ENCODE measurements at regions of chr14 and their contacts with region 1.

Region 1: GRCh38 chr14:61403411-61403810 is 82.0 kb downstream of the PRKCH start:
- DNase-seq: peak in 15 of 35 experiments; percentile 18 to 73 (median 35)
- ATAC-seq: peak; percentile 80 to 90 (median 88)
- H3K4me3 ChIP-seq: no peak overlapping the region
- H3K4me3 Mint-ChIP-seq: peak overlapping the region; percentile 39 to 65 (median 54)
- H3K27ac ChIP-seq: peak overlapping the region; percentile 83
- H3K27ac Mint-ChIP-seq: peak overlapping the region; percentile 94 to 97
- H3K4me1 ChIP-seq: peaks cover 59 to 82% of the 10 kb centered on the region in 2 experiments
- H3K4me1 Mint-ChIP-seq: peaks cover 48 to 91% (median 89%) of the 10 kb centered on the region in 3 donors
- H3K27me3 ChIP-seq: no peaks in the 10 kb centered on the region
- H3K27me3 Mint-ChIP-seq: no peaks in the 10 kb centered on the region

Region 2: GRCh38 chr14:61330511-61330910 is 72.9 kb before region 1 on chr14:
- CTCF ChIA-PET with region 1: interaction called in 1 of 2 experiments, 4 read pairs
- POLR2A ChIA-PET with region 1: interaction called, 3 to 16 read pairs
- DNase-seq: peak in 1 of 35 experiments; percentile 41
- ATAC-seq: peak in 2 of 4 experiments; percentile 11 to 18
- H3K4me3 ChIP-seq: peak overlapping the region in 1 of 2 donors; percentile 10
- H3K4me3 Mint-ChIP-seq: peak overlapping the region; percentile 98 to 99 (median 99)
- H3K27ac ChIP-seq: peak overlapping the region; percentile 93
- H3K27ac Mint-ChIP-seq: peak overlapping the region; percentile 95 to 96
- H3K4me1 ChIP-seq: peaks cover 56 to 75% of the 10 kb centered on the region in 2 experiments
- H3K4me1 Mint-ChIP-seq: peaks cover 88 to 93% (median 89%) of the 10 kb centered on the region in 3 donors
- H3K27me3 ChIP-seq: no peaks in the 10 kb centered on the region
- H3K27me3 Mint-ChIP-seq: no peaks in the 10 kb centered on the region

Region 3: GRCh38 chr14:61420326-61420725 is 16.9 kb after region 1 on chr14:
- CTCF ChIA-PET with region 1: interaction called, 3 to 5 read pairs
- POLR2A ChIA-PET with region 1: interaction called in 1 of 2 experiments, 15 read pairs
- DNase-seq: peak in 3 of 35 experiments; percentile 13 to 65 (median 58)
- ATAC-seq: peak; percentile 33 to 52 (median 47)
- H3K4me3 ChIP-seq: no peak overlapping the region
- H3K4me3 Mint-ChIP-seq: peak overlapping the region in 2 of 3 donors; percentile 37 to 45
- H3K27ac ChIP-seq: peak overlapping the region; percentile 56
- H3K27ac Mint-ChIP-seq: peak overlapping the region in 1 of 2 donors; percentile 82
- H3K4me1 ChIP-seq: peaks cover 54 to 82% of the 10 kb centered on the region in 2 experiments
- H3K4me1 Mint-ChIP-seq: peaks cover 5 to 16% (median 14%) of the 10 kb centered on the region in 3 donors
- H3K27me3 ChIP-seq: no peaks in the 10 kb centered on the region
- H3K27me3 Mint-ChIP-seq: no peaks in the 10 kb centered on the region

Region 4: DNA sequence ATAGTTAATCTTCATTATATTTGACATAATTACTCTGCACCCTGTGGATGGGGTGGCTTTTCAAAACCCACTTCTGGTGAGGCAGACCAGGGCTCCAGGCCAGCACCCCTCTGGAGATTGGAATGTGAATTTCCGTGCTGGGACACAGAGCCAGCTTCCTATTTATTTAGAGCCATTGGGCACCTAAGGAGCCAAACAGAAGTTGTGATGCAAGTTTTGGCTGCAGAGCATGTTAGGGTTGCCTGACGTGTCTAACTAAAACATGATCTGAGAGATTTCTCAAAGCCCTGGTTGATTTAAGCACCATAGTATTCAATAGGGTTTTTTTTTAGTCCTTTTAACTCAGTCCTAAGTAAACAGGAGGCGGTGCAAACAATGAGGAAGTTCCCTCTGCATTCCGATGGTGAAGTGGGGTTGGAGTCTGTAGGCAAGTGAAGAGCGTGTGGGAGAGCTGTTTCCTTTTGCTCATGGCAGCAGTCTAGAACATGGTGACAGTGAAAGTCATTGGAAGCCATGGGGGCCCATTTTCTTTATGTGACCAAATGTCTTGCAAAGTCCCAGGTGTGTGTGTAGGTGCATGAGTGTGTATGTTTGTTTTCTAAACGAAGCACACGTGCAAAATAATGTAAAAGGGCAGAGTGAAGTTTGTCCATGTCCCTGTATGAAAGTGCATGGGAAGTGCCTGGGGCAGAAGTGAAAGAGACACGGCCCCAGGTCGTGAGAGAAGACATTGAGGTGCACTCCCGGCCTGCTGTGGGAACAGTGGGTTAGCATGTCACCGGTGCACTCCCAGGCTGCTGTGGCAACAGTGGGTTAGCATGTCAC is 35.7 kb after region 1 on chr14:
- CTCF ChIA-PET with region 1: no interaction called
- POLR2A ChIA-PET with region 1: interaction called in 1 of 2 experiments, 17 read pairs
- DNase-seq: peak in 27 of 35 experiments; percentile 27 to 73 (median 39)
- ATAC-seq: peak; percentile 50 to 61 (median 54)
- H3K4me3 ChIP-seq: peak overlapping the region; percentile 15 to 23
- H3K4me3 Mint-ChIP-seq: peak overlapping the region; percentile 63 to 84 (median 69)
- H3K27ac ChIP-seq: peak overlapping the region; percentile 77
- H3K27ac Mint-ChIP-seq: peak overlapping the region; percentile 93 to 96
- H3K4me1 ChIP-seq: peaks cover 68 to 76% of the 10 kb centered on the region in 2 experiments
- H3K4me1 Mint-ChIP-seq: peaks cover 89 to 96% (median 94%) of the 10 kb centered on the region in 3 donors
- H3K27me3 ChIP-seq: no peaks in the 10 kb centered on the region
- H3K27me3 Mint-ChIP-seq: no peaks in the 10 kb centered on the region

Region 5: GRCh38 chr14:61451891-61452400 is 48.5 kb after region 1 on chr14:
- CTCF ChIA-PET with region 1: interaction called in 1 of 2 experiments, 4 read pairs
- POLR2A ChIA-PET with region 1: interaction called in 1 of 2 experiments, 20 read pairs
- DNase-seq: no peak
- ATAC-seq: peak in 2 of 4 experiments; percentile 7 to 15
- H3K4me3 ChIP-seq: peak overlapping the region in 1 of 2 donors; percentile 15
- H3K4me3 Mint-ChIP-seq: peak overlapping the region; percentile 43 to 74 (median 65)
- H3K27ac ChIP-seq: peak overlapping the region; percentile 76
- H3K27ac Mint-ChIP-seq: peak overlapping the region; percentile 95
- H3K4me1 ChIP-seq: peaks cover 70 to 81% of the 10 kb centered on the region in 2 experiments
- H3K4me1 Mint-ChIP-seq: peaks cover 98 to 100% (median 98%) of the 10 kb centered on the region in 3 donors
- H3K27me3 ChIP-seq: no peaks in the 10 kb centered on the region
- H3K27me3 Mint-ChIP-seq: no peaks in the 10 kb centered on the region

Region 6: GRCh38 chr14:61512026-61512834 is 108.8 kb after region 1 on chr14:
- CTCF ChIA-PET with region 1: no interaction called
- POLR2A ChIA-PET with region 1: interaction called in 1 of 2 experiments, 10 read pairs
- DNase-seq: no peak
- ATAC-seq: peak in 2 of 4 experiments; percentile 20 to 24
- H3K4me3 ChIP-seq: no peak overlapping the region
- H3K4me3 Mint-ChIP-seq: peak overlapping the region in 2 of 3 donors; percentile 8 to 12
- H3K27ac ChIP-seq: peak overlapping the region; percentile 36
- H3K27ac Mint-ChIP-seq: peak overlapping the region; percentile 67 to 83
- H3K4me1 ChIP-seq: peaks cover 53 to 58% of the 10 kb centered on the region in 2 experiments
- H3K4me1 Mint-ChIP-seq: peaks cover 76 to 92% (median 91%) of the 10 kb centered on the region in 3 donors
- H3K27me3 ChIP-seq: no peaks in the 10 kb centered on the region
- H3K27me3 Mint-ChIP-seq: no peaks in the 10 kb centered on the region

Region 7: GRCh38 chr14:61953602-61954001 is 550.2 kb after region 1 on chr14:
- CTCF ChIA-PET with region 1: no interaction called
- POLR2A ChIA-PET with region 1: no interaction called
- DNase-seq: no peak
- ATAC-seq: no peak
- H3K4me3 ChIP-seq: no peak overlapping the region
- H3K4me3 Mint-ChIP-seq: no peak overlapping the region
- H3K27ac ChIP-seq: no peak overlapping the region
- H3K27ac Mint-ChIP-seq: no peak overlapping the region
- H3K4me1 ChIP-seq: no peaks in the 10 kb centered on the region
- H3K4me1 Mint-ChIP-seq: no peaks in the 10 kb centered on the region
- H3K27me3 ChIP-seq: no peaks in the 10 kb centered on the region
- H3K27me3 Mint-ChIP-seq: peaks cover 7 to 8% of the 10 kb centered on the region in 2 donors